ENCODE measurements at regions of chr13 and their contacts with region 1.

Region 1: GRCh38 chr13:31044377-31045285 is 112.2 kb downstream of the TEX26 start:
- DNase-seq: peak; percentile 57
- H3K4me3 ChIP-seq: no peak overlapping the region
- H3K27ac ChIP-seq: peak overlapping the region; percentile 95
- H3K27me3 ChIP-seq: no peaks in the 10 kb centered on the region
- CTCF ChIP-seq: peak; percentile 97

Region 2: GRCh38 chr13:30114571-30115256 is 929.9 kb before region 1 on chr13:
- CTCF ChIA-PET with region 1: no interaction called
- POLR2A ChIA-PET with region 1: no interaction called
- DNase-seq: no peak
- H3K4me3 ChIP-seq: peak overlapping the region; percentile 58
- H3K27ac ChIP-seq: no peak overlapping the region
- H3K27me3 ChIP-seq: peaks cover 5% of the 10 kb centered on the region
- CTCF ChIP-seq: peak; percentile 90

Region 3: DNA sequence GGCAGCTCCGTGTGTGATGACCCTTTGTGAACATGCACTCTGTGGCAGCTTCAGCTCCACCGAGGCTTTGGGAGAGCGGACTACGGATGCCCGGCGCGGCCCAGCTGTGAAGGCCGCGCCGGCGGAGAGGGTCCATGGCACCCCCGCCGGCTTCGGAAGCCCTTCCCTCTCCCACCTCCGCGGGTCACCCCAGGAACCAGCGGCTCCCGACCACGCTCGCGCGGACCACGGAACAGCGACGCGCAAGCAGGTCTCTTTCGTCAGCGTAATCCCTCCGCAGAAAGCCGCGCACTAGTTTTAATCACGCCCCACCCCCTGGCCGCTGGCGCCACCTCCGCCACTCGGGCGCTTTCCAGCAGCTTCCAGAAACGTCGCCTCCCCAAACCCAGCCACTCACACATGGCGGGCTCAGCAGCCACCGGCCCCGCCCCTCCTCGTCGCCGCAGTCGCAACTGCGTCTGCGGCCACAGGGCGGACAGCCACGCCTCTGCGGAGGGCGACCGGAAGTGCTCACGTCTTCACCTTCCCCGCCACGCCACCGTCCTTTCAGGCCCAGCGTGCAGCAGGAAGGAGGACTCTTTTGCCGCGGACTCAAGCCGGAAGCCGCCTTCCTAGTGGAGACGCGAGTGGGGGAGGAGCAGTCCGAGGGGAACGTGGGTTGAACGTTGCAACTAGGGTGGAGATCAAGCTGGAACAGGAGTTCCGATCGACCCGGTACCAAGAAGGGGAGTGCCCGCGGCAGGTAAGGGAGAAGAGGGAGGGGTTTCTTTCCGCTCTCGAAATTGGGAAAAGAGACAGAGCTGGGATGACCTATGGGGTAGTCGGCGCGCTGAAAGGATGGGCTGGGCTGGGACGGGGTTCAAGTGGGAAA is 427.1 kb before region 1 on chr13 and contains the start of gene USPL1:
- CTCF ChIA-PET with region 1: interaction called, 14 read pairs
- POLR2A ChIA-PET with region 1: interaction called, 6 read pairs
- DNase-seq: peak; percentile 99
- H3K4me3 ChIP-seq: peak within 1 kb of the TSS; percentile 95
- H3K27ac ChIP-seq: peak within 1 kb of the TSS; percentile 99
- H3K27me3 ChIP-seq: no peaks in the 10 kb centered on the region
- CTCF ChIP-seq: peak; percentile 27; the same call in 1 of the 2 replicates
- polyA plus RNA-seq, gene USPL1: 16.7 and 24.1 TPM in 2 replicates

Region 4: DNA sequence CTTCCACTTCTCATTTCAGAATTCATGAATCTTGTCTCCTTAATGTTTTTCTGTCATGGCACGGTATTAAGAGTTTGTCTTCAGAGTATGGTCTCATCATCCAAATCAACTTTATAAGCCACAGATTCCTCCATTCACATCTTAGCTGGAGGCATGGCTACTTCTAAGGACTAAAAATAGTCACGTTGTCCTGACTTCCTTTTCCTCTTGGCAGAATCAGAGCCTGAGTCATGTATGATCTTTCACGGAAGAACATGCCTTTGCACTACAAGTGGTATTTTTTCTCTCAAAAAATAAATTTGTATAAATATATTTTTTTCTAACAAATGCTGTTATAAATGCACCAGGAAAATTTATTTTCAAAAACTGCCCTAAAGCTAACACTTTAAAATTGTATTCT is 237.8 kb before region 1 on chr13:
- CTCF ChIA-PET with region 1: interaction called, 15 read pairs
- POLR2A ChIA-PET with region 1: no interaction called
- DNase-seq: no peak
- H3K4me3 ChIP-seq: no peak overlapping the region
- H3K27ac ChIP-seq: no peak overlapping the region
- H3K27me3 ChIP-seq: no peaks in the 10 kb centered on the region
- CTCF ChIP-seq: no peak

Region 5: DNA sequence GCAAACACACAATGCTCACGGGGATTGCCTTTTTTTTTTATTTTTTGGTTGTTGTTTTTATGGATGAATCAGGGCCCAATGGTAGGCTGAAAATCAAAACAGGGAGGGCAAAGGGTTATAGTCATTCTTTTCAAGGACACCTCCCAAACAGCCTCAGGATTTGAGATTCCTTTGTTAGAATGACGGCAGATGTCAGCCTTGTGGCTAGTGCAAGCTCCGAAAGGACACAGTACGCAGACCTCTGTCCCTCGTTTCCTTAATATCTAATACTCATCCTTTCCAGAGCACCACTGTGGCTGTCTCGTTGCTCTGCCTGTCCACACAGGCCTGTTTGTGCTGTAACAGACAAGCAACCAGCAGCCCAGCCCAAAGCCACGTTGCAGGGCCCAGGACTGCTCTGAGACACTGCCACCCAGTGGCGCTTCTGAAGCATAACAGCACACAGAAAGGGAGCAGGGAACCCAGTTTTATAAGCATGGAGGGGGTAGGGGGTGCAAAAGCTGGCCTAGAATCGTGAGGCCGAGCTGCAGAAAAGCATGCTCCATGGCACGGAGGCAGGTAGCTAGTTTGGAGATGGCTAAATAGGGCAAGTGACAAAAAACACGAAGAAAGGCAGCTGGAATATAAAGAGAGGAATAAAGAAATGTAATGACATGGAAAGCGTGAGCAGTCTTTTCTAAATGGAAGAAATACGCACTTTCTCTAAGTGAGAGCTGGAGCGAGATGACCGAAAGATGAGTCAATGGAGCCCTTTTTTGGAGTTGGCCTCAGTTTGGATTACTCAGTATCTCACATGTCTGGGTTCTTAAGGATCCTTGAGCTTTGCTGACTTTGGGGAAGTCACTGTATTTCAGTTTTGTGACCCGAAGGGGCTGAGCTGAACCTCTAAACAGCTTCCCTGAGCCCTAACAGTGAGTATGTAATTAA is 179.2 kb before region 1 on chr13:
- CTCF ChIA-PET with region 1: interaction called, 57 read pairs
- POLR2A ChIA-PET with region 1: interaction called, 5 read pairs
- DNase-seq: peak; percentile 91
- H3K4me3 ChIP-seq: peak overlapping the region; percentile 45
- H3K27ac ChIP-seq: peak overlapping the region; percentile 100
- H3K27me3 ChIP-seq: no peaks in the 10 kb centered on the region
- CTCF ChIP-seq: peak; percentile 95

Region 6: GRCh38 chr13:31056644-31057271 is 12.1 kb after region 1 on chr13:
- CTCF ChIA-PET with region 1: interaction called, 11 read pairs
- POLR2A ChIA-PET with region 1: interaction called, 3 read pairs
- DNase-seq: no peak
- H3K4me3 ChIP-seq: no peak overlapping the region
- H3K27ac ChIP-seq: no peak overlapping the region
- H3K27me3 ChIP-seq: no peaks in the 10 kb centered on the region
- CTCF ChIP-seq: peak; percentile 13; the same call in 1 of the 2 replicates